CD14-positive monocyte (primary cell): ENCODE measurements at regions of chr3 and their contacts with region 1.

Region 1: GRCh38 chr3:46976326-46977190 is at the start of gene CCDC12:
- DNase-seq: peak; percentile 95 to 96 (median 96)
- H3K4me3 ChIP-seq: peak within 1 kb of the TSS; percentile 67 to 98 (median 79)
- H3K4me3 Mint-ChIP-seq: peak within 1 kb of the TSS; percentile 99 to 100
- H3K27ac ChIP-seq: peak within 1 kb of the TSS; percentile 74 to 92
- H3K27ac Mint-ChIP-seq: peak within 1 kb of the TSS; percentile 97 to 100 (median 99)
- H3K4me1 ChIP-seq: peaks cover 83 to 87% of the 10 kb centered on the region in 2 donors
- H3K4me1 Mint-ChIP-seq: peaks cover 72% of the 10 kb centered on the region
- H3K27me3 ChIP-seq: no peaks in the 10 kb centered on the region
- H3K27me3 Mint-ChIP-seq: no peaks in the 10 kb centered on the region
- CTCF ChIP-seq: no peak
- polyA plus RNA-seq, gene CCDC12: 50.1 to 70.7 (median 55.8) TPM

Region 2: GRCh38 chr3:46695177-46695961 is 281.2 kb before region 1 on chr3:
- intact Hi-C with region 1: loop called in 1 of 2 experiments (anchors 10 kb)
- DNase-seq: peak; percentile 85 to 92 (median 89)
- H3K4me3 ChIP-seq: peak overlapping the region in 1 of 3 experiments; percentile 83
- H3K4me3 Mint-ChIP-seq: peak overlapping the region; percentile 37 to 42
- H3K27ac ChIP-seq: peak overlapping the region; percentile 37 to 70
- H3K27ac Mint-ChIP-seq: peak overlapping the region; percentile 76 to 92 (median 87)
- H3K4me1 ChIP-seq: peaks cover 68 to 78% of the 10 kb centered on the region in 2 donors
- H3K4me1 Mint-ChIP-seq: peaks cover 71% of the 10 kb centered on the region
- H3K27me3 ChIP-seq: peaks cover 0 to 10% of the 10 kb centered on the region in 2 donors
- H3K27me3 Mint-ChIP-seq: peaks cover 13 to 27% (median 18%) of the 10 kb centered on the region in 3 donors
- CTCF ChIP-seq: peak; percentile 40

Region 3: DNA sequence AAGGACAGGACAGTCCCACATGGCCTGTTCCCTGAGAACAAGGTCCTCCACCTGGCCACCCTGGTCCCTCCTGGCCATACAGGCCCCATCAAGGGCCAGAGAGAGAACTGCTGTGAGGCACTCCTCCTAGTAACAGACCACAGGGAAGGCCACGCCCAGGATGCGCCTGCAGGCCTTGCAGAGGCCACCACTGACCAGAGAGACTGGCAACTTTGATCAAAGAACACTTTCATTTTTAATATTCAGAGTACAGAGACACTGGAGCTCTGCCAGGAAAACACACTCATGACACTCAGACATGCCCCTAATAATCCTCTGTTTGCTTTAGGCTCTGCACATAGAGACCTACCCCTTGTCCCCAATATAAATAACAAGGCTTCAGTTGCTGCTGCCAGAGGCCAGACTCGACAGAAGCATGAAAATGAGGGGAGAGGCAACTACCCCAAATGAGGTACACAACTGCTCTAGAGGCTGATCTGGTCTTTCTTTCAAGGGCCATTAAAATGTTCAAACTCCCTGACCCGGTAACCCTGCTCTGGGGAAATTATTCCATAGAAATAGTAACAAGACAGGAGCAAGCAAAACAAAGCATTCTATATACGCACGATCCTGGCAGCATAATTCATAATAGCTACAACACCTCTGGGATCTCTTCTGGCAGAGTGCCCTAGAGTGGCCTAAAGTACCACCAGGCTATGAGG is 44.8 kb before region 1 on chr3:
- intact Hi-C with region 1: loop called in 1 of 2 experiments (anchors 5 kb)
- DNase-seq: peak in 2 of 3 donors; percentile 51 to 77
- H3K4me3 ChIP-seq: peak overlapping the region in 1 of 3 experiments; percentile 57
- H3K4me3 Mint-ChIP-seq: peak overlapping the region; percentile 68 to 77
- H3K27ac ChIP-seq: peak overlapping the region; percentile 91 to 94
- H3K27ac Mint-ChIP-seq: peak overlapping the region; percentile 91 to 98 (median 94)
- H3K4me1 ChIP-seq: peaks cover 100% of the 10 kb centered on the region in 2 donors
- H3K4me1 Mint-ChIP-seq: peaks cover 96% of the 10 kb centered on the region
- H3K27me3 ChIP-seq: no peaks in the 10 kb centered on the region
- H3K27me3 Mint-ChIP-seq: no peaks in the 10 kb centered on the region
- CTCF ChIP-seq: no peak

Region 4: DNA sequence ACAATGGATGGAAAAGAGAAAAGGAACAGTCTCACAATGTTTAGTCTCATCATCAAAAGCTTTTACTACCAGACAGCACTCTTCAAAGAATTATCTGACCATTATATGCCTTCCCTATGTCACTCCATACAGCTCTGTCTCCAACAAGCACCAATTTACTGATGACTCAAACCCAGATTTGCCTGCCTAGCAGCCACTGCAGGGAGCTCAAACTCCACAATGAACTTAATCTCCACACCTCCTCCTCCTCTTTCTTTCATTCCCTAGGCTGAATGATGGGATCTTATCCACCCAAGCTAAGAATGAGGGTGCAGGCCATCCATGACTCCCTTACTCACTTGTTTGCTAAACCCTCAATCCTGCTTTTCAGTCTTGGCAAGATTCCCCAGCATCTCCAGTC is 48.4 kb after region 1 on chr3:
- intact Hi-C with region 1: no loop called
- DNase-seq: no peak
- H3K4me3 ChIP-seq: no peak overlapping the region
- H3K4me3 Mint-ChIP-seq: no peak overlapping the region
- H3K27ac ChIP-seq: peak overlapping the region in 1 of 2 donors; percentile 23
- H3K27ac Mint-ChIP-seq: peak overlapping the region in 2 of 7 donors; percentile 6 to 8
- H3K4me1 ChIP-seq: no peaks in the 10 kb centered on the region
- H3K4me1 Mint-ChIP-seq: no peaks in the 10 kb centered on the region
- H3K27me3 ChIP-seq: no peaks in the 10 kb centered on the region
- H3K27me3 Mint-ChIP-seq: no peaks in the 10 kb centered on the region
- CTCF ChIP-seq: no peak

Region 5: GRCh38 chr3:47225310-47225906 is 248.8 kb after region 1 on chr3:
- intact Hi-C with region 1: loop called in 1 of 2 experiments (anchors 10 kb)
- DNase-seq: peak; percentile 54 to 84 (median 75)
- H3K4me3 ChIP-seq: peak overlapping the region; percentile 18 to 71 (median 41)
- H3K4me3 Mint-ChIP-seq: peak overlapping the region; percentile 24 to 87
- H3K27ac ChIP-seq: peak overlapping the region in 1 of 2 donors; percentile 78
- H3K27ac Mint-ChIP-seq: peak overlapping the region; percentile 58 to 89 (median 80)
- H3K4me1 ChIP-seq: peaks cover 56% of the 10 kb centered on the region in 2 donors
- H3K4me1 Mint-ChIP-seq: peaks cover 54% of the 10 kb centered on the region
- H3K27me3 ChIP-seq: no peaks in the 10 kb centered on the region
- H3K27me3 Mint-ChIP-seq: peaks cover 0 to 4% (median 0%) of the 10 kb centered on the region in 3 donors
- CTCF ChIP-seq: no peak